Aorta (tissue), 5 donors: ENCODE measurements at regions of chr6 and their contacts with region 1.

Region 1: GRCh38 chr6:111642463-111643158 is 36.9 kb upstream of the TRAF3IP2 start:
- DNase-seq: peak in 1 of 2 donors; percentile 73
- ATAC-seq: peak; percentile 89
- H3K4me3 ChIP-seq: no peak overlapping the region
- H3K27ac ChIP-seq: no peak overlapping the region
- H3K4me1 ChIP-seq: no peaks in the 10 kb centered on the region
- H3K27me3 ChIP-seq: no peaks in the 10 kb centered on the region

Region 2: DNA sequence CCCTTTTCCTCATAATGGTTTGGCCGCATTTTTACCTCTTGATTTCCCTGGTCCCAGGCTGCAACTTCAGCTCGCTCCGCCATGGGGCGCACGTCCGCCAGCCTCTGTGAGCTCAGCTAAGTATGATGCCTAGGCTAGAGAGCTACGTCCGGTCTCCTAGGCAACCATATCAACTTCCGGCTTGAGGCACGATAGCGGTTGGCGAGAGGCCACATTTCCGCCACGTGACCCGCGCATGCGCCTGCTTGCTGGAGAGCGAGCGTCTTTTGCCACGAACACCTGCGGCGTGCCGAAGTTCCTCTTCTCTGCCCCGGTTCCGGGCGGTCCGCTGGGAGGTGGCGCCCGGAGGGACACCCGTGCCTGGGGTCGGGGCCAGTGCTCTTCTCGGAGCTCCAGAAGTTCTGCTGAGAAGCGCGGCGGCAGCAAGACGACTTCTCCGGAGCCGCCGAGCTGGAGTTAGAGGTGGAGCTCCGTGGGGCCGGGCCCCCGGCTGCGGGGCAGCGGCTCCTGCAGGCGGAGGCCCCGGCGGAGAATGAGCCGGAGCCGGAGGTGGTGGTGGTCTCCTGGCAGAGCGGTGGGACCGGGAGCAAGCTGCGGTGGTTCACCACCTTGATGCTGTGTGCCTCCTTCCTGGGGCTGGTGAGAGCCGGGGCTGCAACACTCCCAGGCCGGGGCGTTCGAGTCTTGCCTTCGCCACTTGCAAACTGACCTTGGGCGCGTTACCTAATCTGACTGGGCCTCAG is 383.4 kb before region 1 on chr6:
- intact Hi-C with region 1: loop called (anchors 5 to 10 kb)
- DNase-seq: peak; percentile 99 to 100
- ATAC-seq: peak; percentile 100
- H3K4me3 ChIP-seq: peak overlapping the region; percentile 48 to 53
- H3K27ac ChIP-seq: peak overlapping the region in 1 of 2 donors; percentile 72
- H3K4me1 ChIP-seq: peaks cover 0 to 4% of the 10 kb centered on the region in 2 donors
- H3K27me3 ChIP-seq: no peaks in the 10 kb centered on the region

Region 3: GRCh38 chr6:111361648-111362047 is 281.0 kb before region 1 on chr6:
- intact Hi-C with region 1: loop called in 1 of 2 experiments (anchors 10 kb)
- DNase-seq: no peak
- ATAC-seq: peak; percentile 59
- H3K4me3 ChIP-seq: no peak overlapping the region
- H3K27ac ChIP-seq: no peak overlapping the region
- H3K4me1 ChIP-seq: no peaks in the 10 kb centered on the region
- H3K27me3 ChIP-seq: no peaks in the 10 kb centered on the region

Region 4: GRCh38 chr6:111382476-111383300 is 259.9 kb before region 1 on chr6:
- intact Hi-C with region 1: loop called in 1 of 2 experiments (anchors 10 kb)
- DNase-seq: peak in 1 of 2 donors; percentile 69
- ATAC-seq: peak; percentile 63
- H3K4me3 ChIP-seq: no peak overlapping the region
- H3K27ac ChIP-seq: peak overlapping the region; percentile 22 to 70
- H3K4me1 ChIP-seq: no peaks in the 10 kb centered on the region
- H3K27me3 ChIP-seq: no peaks in the 10 kb centered on the region

Region 5: DNA sequence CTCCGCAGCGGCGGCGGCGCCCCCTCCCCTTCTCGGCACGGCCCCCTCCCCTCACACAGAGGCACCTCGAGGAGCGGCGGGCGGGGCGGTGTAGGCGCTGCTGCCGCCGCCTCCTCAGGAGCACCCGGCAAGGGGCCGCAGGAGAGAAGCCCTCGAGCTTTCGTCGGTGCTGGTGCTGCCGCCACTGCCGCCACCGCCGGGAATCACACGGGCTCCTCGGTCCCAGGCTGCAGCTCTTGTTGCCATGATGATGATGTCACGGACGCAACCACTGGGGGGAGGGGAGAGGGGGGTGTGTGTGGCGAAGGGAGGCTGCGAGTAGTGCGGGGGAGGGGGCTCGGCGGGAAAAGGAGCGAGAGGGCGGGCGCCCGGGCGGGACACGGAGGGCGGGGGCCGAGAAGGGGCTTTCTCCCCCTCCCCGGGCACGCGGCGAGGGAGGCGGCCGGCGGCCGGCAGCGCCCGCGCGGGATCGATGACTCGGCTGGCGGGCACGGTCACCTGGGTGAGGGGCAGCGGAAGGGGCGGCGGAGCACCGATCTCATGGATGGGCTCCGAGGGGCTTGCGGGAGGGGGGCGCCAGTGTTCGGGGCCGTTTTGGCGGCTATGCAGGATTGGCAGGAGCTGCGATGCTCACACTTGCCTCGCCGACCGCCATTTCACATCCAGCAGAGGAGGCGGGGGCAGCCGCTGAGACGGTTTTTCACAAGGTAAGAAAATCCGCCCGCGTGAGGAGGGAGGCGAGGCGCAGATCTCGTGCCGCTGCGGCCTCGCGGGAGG is 159.5 kb before region 1 on chr6 and contains the start of gene REV3L:
- intact Hi-C with region 1: no loop called
- DNase-seq: peak; percentile 92 to 95
- ATAC-seq: peak; percentile 89
- H3K4me3 ChIP-seq: peak within 1 kb of the TSS; percentile 91 to 95
- H3K27ac ChIP-seq: peak within 1 kb of the TSS; percentile 89 to 95
- H3K4me1 ChIP-seq: peaks cover 0 to 3% of the 10 kb centered on the region in 2 donors
- H3K27me3 ChIP-seq: no peaks in the 10 kb centered on the region
- total RNA-seq, gene REV3L: 69.1 to 74.9 TPM